Natural killer cell (primary cell): ENCODE measurements at regions of chr1 and their contacts with region 1.

Region 1: DNA sequence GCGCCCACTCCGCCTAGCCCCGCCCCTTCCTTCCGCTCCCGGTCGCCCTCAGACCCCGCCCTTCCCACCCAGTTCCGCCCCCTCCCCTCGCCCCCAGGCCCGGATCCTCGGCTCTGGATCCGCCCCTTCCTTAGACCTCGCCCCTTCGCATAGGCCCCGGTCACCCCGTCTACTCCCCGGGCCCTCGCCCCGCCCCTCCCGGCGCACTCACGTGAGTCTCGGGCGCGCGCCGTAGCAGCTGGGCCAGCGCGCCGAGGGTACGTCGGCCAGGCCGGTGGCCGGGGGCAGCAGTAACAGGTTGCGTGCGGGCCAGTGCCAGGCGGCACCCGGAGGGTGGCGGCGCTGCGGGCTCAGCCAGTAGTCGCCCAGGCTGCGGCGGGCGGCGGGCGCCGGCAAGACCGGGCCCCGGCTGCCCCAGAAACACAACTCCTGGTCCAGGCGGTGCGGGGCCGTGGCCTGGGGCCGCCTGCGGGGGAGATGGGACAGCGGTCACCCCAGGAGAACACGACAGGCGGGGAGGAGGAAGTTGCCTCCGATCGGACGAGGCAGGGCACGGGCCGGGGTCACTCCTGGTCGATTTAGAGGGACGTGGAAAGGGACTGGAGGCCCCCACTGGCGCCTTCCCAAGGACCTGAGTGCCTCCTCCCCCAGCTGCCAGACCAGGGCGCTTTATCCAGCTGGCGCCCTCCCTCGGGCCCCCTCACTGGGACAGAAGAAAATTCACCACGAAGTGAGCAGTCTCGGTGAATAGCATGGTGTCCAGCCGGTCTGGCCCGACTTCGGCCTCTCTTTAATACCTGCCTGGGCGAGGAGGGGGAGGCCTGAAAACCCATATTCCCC is 10.7 kb downstream of the FAM229A start:
- DNase-seq: peak; percentile 88 to 97
- ATAC-seq: peak; percentile 93 to 97 (median 94)
- H3K4me3 ChIP-seq: peak overlapping the region; percentile 47
- H3K4me3 Mint-ChIP-seq: peak overlapping the region; percentile 76
- H3K27ac ChIP-seq: peak overlapping the region; percentile 66
- H3K27ac Mint-ChIP-seq: peak overlapping the region; percentile 64 to 72
- H3K4me1 ChIP-seq: peaks cover 39% of the 10 kb centered on the region
- H3K4me1 Mint-ChIP-seq: peaks cover 28 to 50% of the 10 kb centered on the region in 2 donors
- H3K27me3 ChIP-seq: no peaks in the 10 kb centered on the region
- H3K27me3 Mint-ChIP-seq: no peaks in the 10 kb centered on the region
- CTCF ChIP-seq: peak; percentile 0

Region 2: GRCh38 chr1:32394141-32394889 is 42.7 kb after region 1 on chr1 and contains the start of gene BSDC1:
- intact Hi-C with region 1: loop called (anchors 5 kb)
- DNase-seq: peak; percentile 98 to 99
- ATAC-seq: peak; percentile 96 to 100 (median 97)
- H3K4me3 ChIP-seq: peak within 1 kb of the TSS; percentile 76
- H3K4me3 Mint-ChIP-seq: peak within 1 kb of the TSS; percentile 100
- H3K27ac ChIP-seq: peak within 1 kb of the TSS; percentile 91
- H3K27ac Mint-ChIP-seq: peak within 1 kb of the TSS; percentile 97 to 98
- H3K4me1 ChIP-seq: peaks cover 16% of the 10 kb centered on the region
- H3K4me1 Mint-ChIP-seq: peaks cover 21 to 22% of the 10 kb centered on the region in 2 donors
- H3K27me3 ChIP-seq: no peaks in the 10 kb centered on the region
- H3K27me3 Mint-ChIP-seq: peaks cover 0 to 10% of the 10 kb centered on the region in 2 donors
- CTCF ChIP-seq: no peak
- total RNA-seq, gene BSDC1: 150 to 203 (median 174) TPM